GM10248 (cell line): ENCODE measurements at regions of chr12 and their contacts with region 1.

Region 1: GRCh38 chr12:53200458-53201176 is 6.4 kb downstream of the ITGB7 start:
- DNase-seq: peak; percentile 52
- CTCF ChIP-seq: no peak

Region 2: DNA sequence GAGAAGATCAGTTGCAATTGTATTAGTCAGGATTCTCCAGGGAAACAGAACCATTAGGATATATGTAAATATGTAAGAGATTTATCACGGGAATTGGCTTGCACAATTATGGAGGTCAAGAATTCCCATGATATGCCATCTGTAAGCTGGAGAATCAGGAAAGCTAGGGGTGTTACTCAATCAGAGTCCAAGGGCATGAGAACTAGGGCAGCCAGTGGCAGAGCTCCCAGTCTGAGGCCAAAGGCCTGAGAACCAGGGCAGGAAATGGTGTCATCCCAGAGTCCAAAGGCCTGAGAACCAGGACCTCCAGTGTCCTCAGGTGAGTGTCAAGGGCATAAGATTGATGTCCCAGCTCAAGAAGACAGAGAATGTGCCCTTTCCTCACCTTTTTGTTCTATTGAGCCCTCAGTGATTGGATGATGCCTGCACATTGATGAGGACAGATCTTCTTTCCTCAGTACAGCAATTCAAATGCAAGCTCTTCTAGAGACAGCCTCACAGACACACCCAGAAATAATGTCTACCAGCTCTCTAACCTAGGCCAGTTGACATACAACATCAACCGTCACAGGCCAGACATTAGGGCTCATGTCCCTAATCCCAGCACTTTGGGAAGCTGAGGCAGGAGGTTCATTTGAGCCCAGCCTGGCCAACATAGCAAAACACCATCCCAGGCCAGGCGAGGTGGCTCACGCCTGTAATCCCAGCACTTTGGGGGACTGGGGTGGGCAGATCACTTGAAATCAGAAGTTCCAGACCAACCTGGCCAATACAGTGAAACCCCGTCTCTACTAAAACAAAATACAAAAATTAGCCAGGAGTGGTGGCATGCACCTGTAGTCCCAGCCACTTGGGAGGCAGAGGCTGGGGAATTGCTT is 55.0 kb before region 1 on chr12:
- CTCF ChIA-PET with region 1: no interaction called
- POLR2A ChIA-PET with region 1: no interaction called
- DNase-seq: no peak
- CTCF ChIP-seq: no peak

Region 3: GRCh38 chr12:53180220-53180930 is 20.2 kb before region 1 on chr12 and contains the starts of genes CSAD and ZNF740:
- CTCF ChIA-PET with region 1: interaction called, 13 read pairs
- POLR2A ChIA-PET with region 1: interaction called, 5 read pairs
- DNase-seq: peak; percentile 99
- CTCF ChIP-seq: no peak

Region 4: DNA sequence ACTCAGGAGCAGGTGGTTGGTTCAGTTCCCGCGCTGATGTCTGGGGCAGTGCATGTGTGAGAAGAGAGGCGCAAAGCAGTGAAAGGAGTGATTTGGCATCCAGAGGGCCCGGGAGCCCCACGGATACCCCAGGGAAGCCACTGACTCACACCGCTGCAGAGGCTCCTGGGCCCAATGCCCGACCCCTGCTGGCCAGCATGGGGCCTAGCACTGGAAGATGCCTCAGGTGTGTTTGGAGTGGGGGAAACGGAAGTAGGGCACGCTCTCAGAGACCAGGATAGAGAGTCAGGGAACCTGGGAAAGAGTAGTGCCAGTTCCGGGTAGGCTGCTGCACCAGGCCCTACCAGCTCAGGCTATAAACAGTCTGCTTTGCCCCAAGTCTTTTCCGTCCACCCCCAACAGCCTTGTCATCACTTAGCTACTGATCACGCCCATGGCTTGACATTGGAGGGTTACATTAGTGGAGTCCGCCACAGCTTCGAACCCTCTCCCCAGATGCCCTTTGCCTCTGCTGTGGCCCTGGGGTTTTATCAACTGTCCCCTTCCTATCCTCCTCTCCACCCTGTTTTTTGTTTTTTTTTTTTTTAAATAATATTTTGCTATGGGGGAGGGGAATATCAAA is 10.4 kb before region 1 on chr12:
- CTCF ChIA-PET with region 1: interaction called, 22 read pairs
- POLR2A ChIA-PET with region 1: interaction called, 4 read pairs
- DNase-seq: peak; percentile 61
- CTCF ChIP-seq: peak; percentile 76